ENCODE measurements at regions of chr17 and their contacts with region 1.

Region 1: DNA sequence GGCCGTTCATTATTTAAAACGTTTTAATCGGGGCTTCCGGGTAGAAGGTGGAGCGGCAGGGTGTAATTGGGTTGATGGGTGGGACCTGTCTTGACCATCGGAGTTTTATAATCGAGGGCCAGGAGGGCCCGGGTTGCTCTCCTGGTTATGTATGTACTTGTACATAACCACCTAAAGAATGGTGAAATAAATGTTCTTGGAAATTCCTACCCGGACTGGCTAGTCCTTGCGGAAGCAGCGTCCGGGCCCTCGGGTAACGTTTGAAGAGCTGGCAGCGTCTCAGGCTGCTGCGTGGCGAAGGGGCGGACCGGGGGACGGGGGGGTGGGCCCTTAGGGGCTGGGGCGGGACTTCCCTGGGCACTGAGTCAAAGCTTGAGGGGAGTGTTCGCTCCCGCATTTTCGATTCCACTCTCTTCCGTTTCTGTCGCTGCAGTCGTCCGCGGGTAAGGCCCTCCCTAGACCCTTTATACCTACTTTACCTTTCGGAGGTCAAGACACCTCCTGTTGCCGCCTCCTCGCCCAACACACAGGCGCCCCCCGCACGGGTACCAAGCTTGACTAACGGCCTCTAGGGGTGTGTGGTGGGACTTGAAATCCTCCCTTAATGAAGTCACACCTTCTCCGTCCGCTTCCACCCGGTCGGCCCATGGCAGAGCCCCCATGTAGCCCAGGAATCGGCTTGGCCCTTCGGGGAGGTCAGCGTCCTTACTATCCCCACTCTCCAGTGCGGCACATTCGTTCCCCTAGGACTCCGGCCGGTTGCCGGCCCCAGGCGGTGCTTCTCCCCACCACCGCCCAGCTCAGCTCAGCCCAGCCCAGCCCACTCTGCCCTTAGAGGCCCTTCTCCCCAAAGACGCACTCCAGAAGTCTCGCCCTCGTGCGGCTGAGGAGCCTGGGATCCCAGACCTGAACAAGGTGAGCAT is at the start of gene TMEM106A:
- DNase-seq: peak; percentile 75
- ATAC-seq: peak; percentile 85
- H3K4me3 Mint-ChIP-seq: peak within 1 kb of the TSS; percentile 94
- H3K27ac Mint-ChIP-seq: peak within 1 kb of the TSS; percentile 96
- H3K4me1 Mint-ChIP-seq: peaks cover 20% of the 10 kb centered on the region
- H3K27me3 Mint-ChIP-seq: no peaks in the 10 kb centered on the region
- CTCF ChIP-seq: no peak
- total RNA-seq, gene TMEM106A: 3.8 to 4.4 TPM (median 4.2 TPM) in 3 replicates

Region 2: DNA sequence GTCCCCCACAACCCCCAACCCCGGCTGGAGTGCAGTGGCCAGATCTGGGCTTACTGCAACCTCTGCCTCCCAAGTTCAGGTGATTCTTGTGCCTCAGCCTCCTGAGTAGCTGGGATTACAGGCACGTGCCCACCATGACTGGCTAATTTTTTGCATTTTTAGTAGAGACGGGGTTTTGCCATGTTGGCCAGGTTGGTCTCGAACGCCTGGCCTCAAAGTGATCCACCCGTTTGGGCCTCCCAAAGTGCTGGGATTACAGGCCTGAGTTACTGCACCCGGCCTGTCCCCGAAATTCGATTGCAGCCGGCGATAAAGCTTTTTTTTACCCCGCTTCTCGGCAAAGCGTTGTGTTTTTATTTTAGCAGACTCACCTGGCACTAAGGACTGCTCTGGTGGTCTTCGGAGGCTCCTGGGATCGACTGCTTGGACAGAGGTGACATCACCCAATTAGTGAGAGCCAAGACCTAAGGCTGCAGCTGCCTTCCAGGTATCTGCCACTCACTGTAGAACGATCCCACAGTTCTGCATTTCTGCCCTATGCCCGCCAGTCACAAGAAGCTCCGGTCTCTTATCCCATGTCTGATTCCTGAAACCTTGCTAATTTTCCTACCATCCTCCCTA is 104.9 kb after region 1 on chr17:
- CTCF ChIA-PET with region 1: interaction called, 4 read pairs
- POLR2A ChIA-PET with region 1: interaction called, 11 read pairs
- DNase-seq: peak; percentile 30
- ATAC-seq: no peak
- H3K4me3 Mint-ChIP-seq: 0 out of 2 replicates have a peak overlapping the region, but pooled peaks have one; percentile 8
- H3K27ac Mint-ChIP-seq: 0 out of 2 replicates have a peak overlapping the region, but pooled peaks have one; percentile 41
- H3K4me1 Mint-ChIP-seq: peaks cover 3% of the 10 kb centered on the region
- H3K27me3 Mint-ChIP-seq: peaks cover 10% of the 10 kb centered on the region
- CTCF ChIP-seq: no peak